ENCODE measurements at regions of chr1 and their contacts with region 1.

Region 1: GRCh38 chr1:24874611-24875234 is 55.4 kb downstream of the RUNX3 start:
- DNase-seq: peak in 1 of 9 experiments; percentile 41
- ATAC-seq: no peak
- H3K4me3 ChIP-seq: no peak overlapping the region
- H3K4me3 Mint-ChIP-seq: no peak overlapping the region
- H3K27ac ChIP-seq: no peak overlapping the region
- H3K27ac Mint-ChIP-seq: no peak overlapping the region
- H3K4me1 ChIP-seq: peaks cover 20% of the 10 kb centered on the region
- H3K4me1 Mint-ChIP-seq: peaks cover 20% of the 10 kb centered on the region
- H3K27me3 ChIP-seq: no peaks in the 10 kb centered on the region
- H3K27me3 Mint-ChIP-seq: no peaks in the 10 kb centered on the region
- CTCF ChIP-seq: no peak

Region 2: DNA sequence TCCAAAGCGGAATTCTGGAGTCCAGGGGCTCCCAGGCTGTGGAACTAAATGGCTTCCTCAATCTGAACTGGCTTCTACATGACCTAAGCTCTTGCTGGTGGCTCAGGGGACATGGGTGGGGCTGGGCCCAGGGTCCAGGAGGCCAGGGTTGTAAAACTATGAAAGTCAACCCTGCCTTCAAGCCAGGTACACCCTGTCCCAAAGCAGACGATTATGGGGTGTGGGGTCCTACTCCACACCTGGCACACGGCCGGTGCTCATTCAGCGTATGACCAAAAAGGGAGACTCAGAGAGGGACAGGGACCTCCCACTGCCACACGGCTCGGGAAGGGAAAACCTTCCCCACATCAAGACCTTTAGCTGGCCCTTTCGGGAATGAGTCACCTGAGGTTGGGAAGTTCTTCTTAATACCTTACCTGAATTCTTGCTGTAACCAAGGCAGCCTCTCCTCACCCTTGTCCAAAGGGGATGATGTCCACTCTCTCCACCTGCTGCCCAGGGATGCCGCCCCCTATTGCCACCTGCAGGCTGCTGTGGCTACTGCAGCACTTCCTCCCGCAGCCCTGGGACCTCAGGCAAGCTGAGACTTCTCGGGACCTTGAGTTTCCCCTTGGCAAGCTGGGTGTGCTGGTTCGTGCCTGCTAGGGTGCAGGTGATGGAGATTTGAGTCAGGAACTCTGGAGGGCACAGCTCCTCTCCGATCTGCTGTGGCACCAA is 23.2 kb after region 1 on chr1:
- CTCF ChIA-PET with region 1: interaction called, 10 read pairs
- POLR2A ChIA-PET with region 1: no interaction called
- intact Hi-C with region 1: no loop called
- DNase-seq: peak in 7 of 9 experiments; percentile 35 to 75 (median 57)
- ATAC-seq: peak; percentile 52
- H3K4me3 ChIP-seq: no peak overlapping the region
- H3K4me3 Mint-ChIP-seq: no peak overlapping the region
- H3K27ac ChIP-seq: no peak overlapping the region
- H3K27ac Mint-ChIP-seq: peak overlapping the region; percentile 58
- H3K4me1 ChIP-seq: peaks cover 24% of the 10 kb centered on the region
- H3K4me1 Mint-ChIP-seq: peaks cover 36% of the 10 kb centered on the region
- H3K27me3 ChIP-seq: no peaks in the 10 kb centered on the region
- H3K27me3 Mint-ChIP-seq: no peaks in the 10 kb centered on the region
- CTCF ChIP-seq: peak; percentile 72